ENCODE measurements at regions of chr3 and their contacts with region 1.

Region 1: GRCh38 chr3:3200632-3201212 is 21.2 kb upstream of the CRBN start:
- DNase-seq: no peak
- H3K4me3 ChIP-seq: no peak overlapping the region
- H3K27me3 ChIP-seq: no peaks in the 10 kb centered on the region
- CTCF ChIP-seq: peak; percentile 80

Region 2: GRCh38 chr3:4271834-4272233 is 1071.1 kb after region 1 on chr3:
- CTCF ChIA-PET with region 1: interaction called, 15 read pairs
- POLR2A ChIA-PET with region 1: no interaction called
- DNase-seq: no peak
- H3K4me3 ChIP-seq: no peak overlapping the region
- H3K27me3 ChIP-seq: no peaks in the 10 kb centered on the region
- CTCF ChIP-seq: peak; percentile 36; the same call in 1 of the 2 replicates